Activated CD4-positive, alpha-beta memory T cell treated with anti-CD3 and anti-CD28 coated beads for 36 hours (primary cell): ENCODE measurements at regions of chr6 and their contacts with region 1.

Region 1: DNA sequence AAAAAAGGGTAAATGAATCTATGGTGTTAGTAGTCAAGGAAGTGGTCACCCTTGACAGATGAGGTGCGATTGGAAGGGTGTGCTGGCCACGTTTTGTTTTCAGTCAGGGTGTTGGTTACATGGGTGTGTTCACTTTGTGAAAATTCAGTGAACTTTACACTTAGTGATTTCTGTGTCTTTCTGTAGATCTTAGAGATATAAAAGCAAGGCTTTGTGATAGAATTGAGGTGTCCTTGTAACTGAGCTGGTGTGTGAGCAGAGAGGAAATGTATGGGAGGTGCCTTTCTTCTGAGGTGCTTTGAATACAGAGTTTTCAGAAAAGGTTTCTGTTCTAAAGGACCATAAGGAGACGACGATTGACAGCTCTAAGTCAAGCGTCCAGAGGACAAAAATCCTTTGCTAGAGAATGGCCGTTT is 90.5 kb downstream of the SAMD3 start:
- DNase-seq: peak; percentile 79
- H3K4me3 Mint-ChIP-seq: peak overlapping the region; percentile 54
- H3K27ac Mint-ChIP-seq: peak overlapping the region; percentile 86
- H3K4me1 Mint-ChIP-seq: peaks cover 63% of the 10 kb centered on the region
- H3K27me3 Mint-ChIP-seq: no peaks in the 10 kb centered on the region

Region 2: DNA sequence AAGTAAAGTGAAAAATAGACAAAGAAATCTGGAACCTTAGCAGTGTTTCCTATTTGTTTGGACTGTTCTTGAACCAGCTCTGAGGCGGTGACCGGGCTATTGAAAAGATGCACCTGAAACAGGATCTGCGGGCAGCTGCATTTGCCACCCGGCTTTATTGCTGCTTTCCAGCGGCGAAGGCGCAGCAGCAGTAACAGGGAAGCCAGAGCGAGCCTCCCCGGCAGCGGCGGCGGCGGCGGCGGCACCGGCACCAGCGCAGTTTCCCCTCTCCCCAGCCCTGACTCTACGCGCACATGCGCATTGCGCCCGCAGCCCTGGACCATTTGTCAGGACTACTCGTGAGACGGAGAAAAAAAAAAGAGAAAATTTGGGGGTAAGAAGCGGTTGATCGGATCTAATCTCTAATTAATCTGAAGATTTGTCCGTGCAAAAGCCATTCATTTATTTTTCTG is 114.0 kb before region 1 on chr6 and contains the start of gene L3MBTL3:
- CTCF ChIA-PET with region 1: no interaction called
- POLR2A ChIA-PET with region 1: no interaction called
- intact Hi-C with region 1: no loop called
- DNase-seq: peak; percentile 91
- H3K4me3 Mint-ChIP-seq: peak within 1 kb of the TSS; percentile 99
- H3K27ac Mint-ChIP-seq: peak within 1 kb of the TSS; percentile 79
- H3K4me1 Mint-ChIP-seq: peaks cover 13% of the 10 kb centered on the region
- H3K27me3 Mint-ChIP-seq: no peaks in the 10 kb centered on the region
- total RNA-seq, gene L3MBTL3: 5.2 to 7.4 TPM

Region 3: GRCh38 chr6:130037207-130037811 is 95.0 kb before region 1 on chr6:
- CTCF ChIA-PET with region 1: no interaction called
- POLR2A ChIA-PET with region 1: no interaction called
- intact Hi-C with region 1: loop called (anchors 2 kb)
- DNase-seq: no peak
- H3K4me3 Mint-ChIP-seq: no peak overlapping the region
- H3K27ac Mint-ChIP-seq: no peak overlapping the region
- H3K4me1 Mint-ChIP-seq: peaks cover 43% of the 10 kb centered on the region
- H3K27me3 Mint-ChIP-seq: no peaks in the 10 kb centered on the region

Region 4: DNA sequence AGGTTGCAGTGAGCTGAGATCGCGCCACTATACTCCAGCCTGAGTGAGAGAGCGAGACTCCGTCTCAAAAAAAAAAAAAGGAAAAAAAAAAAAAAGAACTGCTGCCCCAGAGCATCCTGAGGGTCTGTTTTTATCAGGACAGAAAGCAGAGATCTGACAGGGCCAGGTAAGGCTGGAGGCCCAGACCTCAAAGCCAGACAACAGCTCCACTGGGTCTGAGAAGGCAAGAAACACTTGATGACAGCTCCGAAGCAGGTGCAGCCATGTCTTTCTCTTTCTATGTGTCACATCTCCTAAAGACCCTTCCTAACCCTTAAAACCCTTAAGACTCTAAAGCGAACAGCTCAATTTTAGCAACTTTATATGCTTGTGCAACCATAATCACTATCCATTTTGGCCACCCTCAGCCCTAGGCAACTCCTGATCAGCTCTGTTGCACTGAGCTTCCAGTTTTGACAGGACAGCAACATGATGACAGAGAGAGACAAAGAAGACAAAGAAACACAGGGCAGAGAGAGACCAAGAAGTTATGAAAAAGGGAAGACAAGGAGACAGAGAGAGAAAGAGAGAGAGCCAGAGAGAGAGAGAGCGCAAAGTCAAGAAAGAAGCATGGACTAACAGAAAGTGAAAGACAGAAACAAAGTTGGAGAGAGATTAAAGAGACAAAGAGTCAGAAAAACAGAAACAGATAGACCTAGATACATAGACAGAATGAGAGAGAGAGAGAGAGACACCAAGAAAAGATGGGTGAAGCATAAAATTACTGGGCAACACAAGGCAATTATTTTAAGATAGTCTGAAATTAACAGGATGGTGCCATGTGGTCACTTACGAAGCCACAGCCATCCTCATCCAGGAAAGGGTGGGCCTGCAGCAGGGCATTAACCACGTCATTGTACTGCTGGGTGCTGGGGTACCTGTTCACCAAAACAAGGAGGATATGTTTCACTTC is 51.3 kb after region 1 on chr6:
- CTCF ChIA-PET with region 1: no interaction called
- POLR2A ChIA-PET with region 1: no interaction called
- intact Hi-C with region 1: loop called (anchors 2 kb)
- DNase-seq: peak; percentile 61
- H3K4me3 Mint-ChIP-seq: peak overlapping the region; percentile 52
- H3K27ac Mint-ChIP-seq: peak overlapping the region; percentile 77
- H3K4me1 Mint-ChIP-seq: peaks cover 40% of the 10 kb centered on the region
- H3K27me3 Mint-ChIP-seq: no peaks in the 10 kb centered on the region

Region 5: GRCh38 chr6:130223508-130223907 is 91.2 kb after region 1 on chr6:
- CTCF ChIA-PET with region 1: interaction called, 7 read pairs
- POLR2A ChIA-PET with region 1: no interaction called
- intact Hi-C with region 1: loop called (anchors 2 kb)
- DNase-seq: peak; percentile 82
- H3K4me3 Mint-ChIP-seq: peak overlapping the region; percentile 3
- H3K27ac Mint-ChIP-seq: peak overlapping the region; percentile 58
- H3K4me1 Mint-ChIP-seq: peaks cover 33% of the 10 kb centered on the region
- H3K27me3 Mint-ChIP-seq: no peaks in the 10 kb centered on the region

Region 6: DNA sequence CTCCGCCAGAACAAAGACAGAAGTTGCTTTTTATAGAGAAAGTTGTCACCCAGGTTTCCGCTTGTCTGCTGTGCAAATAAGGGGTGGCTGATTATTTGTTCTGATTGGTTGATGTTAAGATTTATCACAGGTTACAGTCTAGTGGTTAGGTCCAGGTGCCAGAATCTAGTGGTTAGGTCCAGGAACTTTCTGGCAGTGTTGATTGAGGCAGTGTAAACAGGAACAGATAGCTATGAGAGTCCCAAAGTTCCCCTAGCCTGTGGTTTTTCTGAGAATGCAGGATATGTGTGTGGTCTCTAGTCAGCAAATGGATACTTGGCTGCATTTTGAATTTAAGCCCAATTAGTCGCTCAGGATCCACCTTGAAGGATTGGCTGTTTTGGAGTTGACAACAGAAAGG is 381.5 kb after region 1 on chr6:
- CTCF ChIA-PET with region 1: no interaction called
- POLR2A ChIA-PET with region 1: no interaction called
- intact Hi-C with region 1: loop called (anchors 10 kb)
- DNase-seq: peak; percentile 68
- H3K4me3 Mint-ChIP-seq: no peak overlapping the region
- H3K27ac Mint-ChIP-seq: peak overlapping the region; percentile 81
- H3K4me1 Mint-ChIP-seq: peaks cover 65% of the 10 kb centered on the region
- H3K27me3 Mint-ChIP-seq: no peaks in the 10 kb centered on the region